Activated B cell treated with CpG ODN at 0.5 μM for 24 hours (primary cell): ENCODE measurements at regions of chr2 and their contacts with region 1.

Region 1: DNA sequence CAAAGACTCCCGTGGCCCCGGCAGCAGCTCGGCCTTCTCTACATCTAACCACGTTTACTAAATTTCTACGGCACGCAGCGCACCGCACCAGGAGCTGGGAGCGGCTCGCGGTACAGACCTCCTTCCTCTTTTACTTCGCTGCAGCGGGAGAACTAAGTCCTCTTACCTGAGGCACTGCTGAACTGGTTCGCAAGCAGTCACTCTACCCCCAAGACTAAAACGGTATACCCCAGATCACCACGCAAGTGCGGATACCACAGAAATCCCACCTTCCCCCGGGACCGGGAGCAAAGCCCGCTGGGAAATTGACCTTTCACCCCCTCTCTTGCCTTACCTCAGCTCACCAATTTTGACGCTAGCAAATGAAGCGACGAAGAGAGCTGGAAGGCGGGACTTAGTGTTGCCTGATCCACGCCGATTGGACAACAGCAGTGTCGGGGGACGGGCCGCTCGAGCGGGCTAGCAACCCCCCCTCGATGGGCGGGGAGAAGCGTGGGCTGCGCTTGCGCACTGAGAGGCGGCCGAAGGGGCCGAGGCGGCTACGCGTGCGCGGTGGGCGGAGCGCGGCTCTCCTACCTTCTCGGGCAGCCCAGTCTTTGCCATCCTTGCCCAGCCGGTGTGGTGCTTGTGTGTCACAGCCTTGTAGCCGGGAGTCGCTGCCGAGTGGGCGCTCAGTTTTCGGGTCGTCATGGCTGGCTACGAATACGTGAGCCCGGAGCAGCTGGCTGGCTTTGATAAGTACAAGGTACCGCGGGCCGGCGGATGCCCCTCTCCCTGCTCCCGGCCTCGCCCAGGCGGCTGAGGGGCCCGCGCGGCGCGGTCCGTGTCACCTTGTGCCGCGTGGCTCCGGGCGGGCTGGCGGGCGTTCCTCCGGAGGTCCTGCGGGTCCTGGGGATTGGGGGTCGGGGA is at the start of gene SELENOI:
- DNase-seq: peak; percentile 99
- ATAC-seq: peak; percentile 96
- H3K4me3 Mint-ChIP-seq: peak within 1 kb of the TSS; percentile 95
- H3K27ac Mint-ChIP-seq: peak within 1 kb of the TSS; percentile 95
- H3K4me1 Mint-ChIP-seq: peaks cover 42% of the 10 kb centered on the region
- H3K27me3 Mint-ChIP-seq: no peaks in the 10 kb centered on the region
- CTCF ChIP-seq: no peak
- total RNA-seq, gene SELENOI: 20.2 and 21.1 TPM in 2 replicates

Region 2: DNA sequence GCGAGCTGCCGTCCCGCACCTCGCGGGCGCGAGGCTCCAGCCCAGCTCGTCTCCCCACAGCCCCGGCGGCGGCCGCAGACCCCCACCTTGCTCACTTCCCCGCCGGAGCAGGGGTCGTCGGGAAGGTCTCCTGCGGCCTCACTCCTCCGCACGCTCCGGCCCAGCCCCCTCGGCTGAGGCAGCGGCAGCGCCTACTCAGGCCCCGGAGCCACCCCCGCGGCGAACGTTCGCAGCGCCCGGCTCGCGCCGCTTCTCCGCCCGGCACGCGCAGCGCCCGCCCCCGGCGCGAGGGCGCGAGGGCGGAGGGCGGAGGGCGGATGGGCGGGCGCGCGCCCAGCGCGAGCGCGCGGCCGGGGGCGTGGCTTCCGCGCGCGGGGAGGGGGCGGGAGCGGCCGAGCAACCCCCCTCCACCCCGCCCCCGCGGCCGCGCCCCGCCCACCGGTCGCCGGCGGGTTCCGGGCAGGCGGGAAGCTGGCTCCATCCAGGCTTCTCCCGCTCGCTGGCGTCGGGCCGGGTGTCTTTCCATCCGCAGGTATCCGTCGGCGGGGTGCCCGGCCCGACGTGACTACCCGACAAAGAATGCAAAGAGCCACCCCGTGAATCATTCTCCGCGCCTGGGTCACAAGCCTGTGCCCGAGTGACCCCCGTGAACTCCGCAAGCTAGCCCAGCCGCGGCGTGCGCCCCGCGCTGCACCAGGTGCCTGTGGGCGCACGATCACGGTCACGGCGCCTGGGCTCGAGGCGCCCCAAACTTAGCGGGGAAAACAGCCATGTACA is 672.3 kb before region 1 on chr2 and contains the start of gene DTNB:
- CTCF ChIA-PET with region 1: no interaction called
- POLR2A ChIA-PET with region 1: no interaction called
- intact Hi-C with region 1: loop called (anchors 10 kb)
- DNase-seq: peak; percentile 83
- ATAC-seq: peak; percentile 79
- H3K4me3 Mint-ChIP-seq: peak within 1 kb of the TSS; percentile 88
- H3K27ac Mint-ChIP-seq: peak within 1 kb of the TSS; percentile 72
- H3K4me1 Mint-ChIP-seq: peaks cover 15% of the 10 kb centered on the region
- H3K27me3 Mint-ChIP-seq: no peaks in the 10 kb centered on the region
- CTCF ChIP-seq: no peak
- total RNA-seq, gene DTNB: 18.3 and 28.9 TPM in 2 replicates

Region 3: DNA sequence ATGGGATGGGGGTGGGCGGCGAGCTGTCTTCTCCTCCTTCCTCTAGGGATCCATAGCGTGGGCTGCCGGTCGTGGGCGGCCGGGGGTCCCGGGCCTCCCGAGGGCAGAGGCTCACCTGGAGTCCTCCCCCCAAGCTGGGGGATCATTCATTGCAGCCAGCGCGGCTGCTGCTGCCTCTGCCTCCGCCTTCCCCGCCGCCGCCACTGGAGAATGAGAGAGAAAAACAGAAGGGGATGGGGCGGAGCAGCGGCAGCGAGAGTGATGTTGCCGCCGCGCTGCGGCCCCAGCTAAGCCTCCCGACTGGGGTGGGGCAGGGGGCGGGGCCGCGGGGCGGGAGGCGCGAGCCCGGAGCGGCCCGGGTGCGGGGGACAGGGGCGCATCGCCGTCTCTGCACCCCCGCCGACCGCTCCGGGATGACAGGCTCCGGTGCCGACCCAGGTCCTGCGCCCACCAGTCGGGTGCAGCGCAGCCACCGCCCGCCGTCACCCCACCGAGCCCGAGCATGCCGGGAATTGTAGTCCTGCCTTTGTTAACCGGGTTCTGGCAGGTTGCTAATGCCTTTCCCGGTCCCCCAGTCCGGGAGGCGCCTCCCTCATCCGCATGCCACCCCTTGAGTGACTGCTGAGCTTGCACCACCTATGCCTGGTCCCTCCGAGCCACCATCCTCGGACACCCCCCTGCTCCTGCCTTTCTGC is 363.4 kb before region 1 on chr2 and contains the start of gene KIF3C:
- CTCF ChIA-PET with region 1: no interaction called
- POLR2A ChIA-PET with region 1: no interaction called
- intact Hi-C with region 1: loop called (anchors 5 kb)
- DNase-seq: peak; percentile 60
- ATAC-seq: peak; percentile 86
- H3K4me3 Mint-ChIP-seq: peak within 1 kb of the TSS; percentile 86
- H3K27ac Mint-ChIP-seq: peak within 1 kb of the TSS; percentile 18
- H3K4me1 Mint-ChIP-seq: no peaks in the 10 kb centered on the region
- H3K27me3 Mint-ChIP-seq: no peaks in the 10 kb centered on the region
- CTCF ChIP-seq: no peak
- total RNA-seq, gene KIF3C: 1.5 and 1.8 TPM in 2 replicates

Region 4: DNA sequence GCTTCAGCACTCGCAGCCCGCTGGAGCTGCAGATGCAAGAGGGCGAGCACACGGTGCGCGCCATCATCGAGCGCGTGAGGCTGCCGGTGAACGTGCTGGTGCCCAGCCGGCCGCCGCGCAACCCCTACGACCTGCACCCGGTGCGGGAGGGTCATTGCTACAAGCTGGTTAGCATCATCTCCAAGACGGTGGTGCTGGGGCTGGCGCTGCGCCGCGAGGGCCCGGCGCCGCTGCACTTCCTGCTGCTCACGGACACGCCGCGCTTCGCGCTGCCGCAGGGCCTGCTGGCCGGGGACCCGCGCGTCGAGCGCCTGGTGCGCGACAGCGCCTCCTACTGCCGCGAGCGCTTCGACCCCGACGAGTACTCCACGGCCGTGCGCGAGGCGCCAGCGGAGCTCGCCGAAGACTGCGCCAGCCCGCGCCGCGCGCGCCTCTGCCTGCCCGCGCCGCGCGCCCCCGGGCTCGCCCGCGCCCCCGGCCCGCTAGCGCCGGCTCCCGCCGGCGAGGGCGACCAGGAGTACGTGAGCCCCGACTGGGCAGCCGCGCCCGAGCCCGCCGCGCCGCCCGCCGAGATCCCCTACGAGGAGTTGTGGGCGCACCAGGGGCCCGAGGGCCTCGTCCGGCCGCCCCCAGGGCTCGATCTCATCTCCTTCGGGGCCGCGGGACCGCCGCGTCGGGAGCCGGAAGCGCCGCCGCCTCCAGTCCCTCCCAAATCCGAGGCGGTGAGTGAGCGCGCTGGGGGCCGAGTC is 161.1 kb before region 1 on chr2:
- CTCF ChIA-PET with region 1: no interaction called
- POLR2A ChIA-PET with region 1: interaction called, 11 read pairs
- intact Hi-C with region 1: no loop called
- DNase-seq: peak; percentile 80
- ATAC-seq: peak; percentile 98
- H3K4me3 Mint-ChIP-seq: peak overlapping the region; percentile 75
- H3K27ac Mint-ChIP-seq: no peak overlapping the region
- H3K4me1 Mint-ChIP-seq: peaks cover 10% of the 10 kb centered on the region
- H3K27me3 Mint-ChIP-seq: peaks cover 13% of the 10 kb centered on the region
- CTCF ChIP-seq: no peak

Region 5: DNA sequence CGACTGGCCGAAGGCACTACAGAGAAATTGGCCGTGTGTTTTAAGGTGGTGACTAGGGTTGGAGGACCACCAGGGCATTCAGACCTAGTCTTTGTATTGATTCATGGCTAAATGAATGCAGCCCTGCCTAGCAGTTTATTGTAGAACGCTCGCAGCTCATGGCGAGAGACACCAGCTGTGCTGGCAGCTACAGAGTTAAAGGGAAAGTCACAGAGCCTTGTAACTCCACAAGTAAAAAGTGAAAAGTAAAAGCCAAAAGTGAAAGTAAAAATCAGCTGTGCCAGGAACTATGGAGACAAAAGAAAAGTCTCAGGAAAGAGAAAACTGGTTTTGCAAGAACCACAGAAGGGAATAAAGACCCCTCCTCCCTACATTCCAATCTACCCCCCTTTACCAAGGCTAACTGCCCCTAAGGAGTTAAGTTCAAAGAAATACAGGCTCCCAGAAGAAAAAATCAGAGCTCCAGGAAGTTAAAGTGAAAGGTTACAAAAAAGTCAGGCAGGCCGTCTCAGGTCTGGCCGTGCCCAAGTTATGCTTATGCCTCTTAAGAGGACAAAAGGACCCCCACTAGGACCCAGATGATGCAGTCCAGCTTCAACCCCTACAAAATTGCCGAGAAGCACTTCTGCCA is 46.2 kb before region 1 on chr2:
- CTCF ChIA-PET with region 1: no interaction called
- POLR2A ChIA-PET with region 1: interaction called, 25 read pairs
- intact Hi-C with region 1: loop called (anchors 1 kb)
- DNase-seq: no peak
- ATAC-seq: peak; percentile 53
- H3K4me3 Mint-ChIP-seq: no peak overlapping the region
- H3K27ac Mint-ChIP-seq: no peak overlapping the region
- H3K4me1 Mint-ChIP-seq: no peaks in the 10 kb centered on the region
- H3K27me3 Mint-ChIP-seq: no peaks in the 10 kb centered on the region
- CTCF ChIP-seq: no peak

Region 6: DNA sequence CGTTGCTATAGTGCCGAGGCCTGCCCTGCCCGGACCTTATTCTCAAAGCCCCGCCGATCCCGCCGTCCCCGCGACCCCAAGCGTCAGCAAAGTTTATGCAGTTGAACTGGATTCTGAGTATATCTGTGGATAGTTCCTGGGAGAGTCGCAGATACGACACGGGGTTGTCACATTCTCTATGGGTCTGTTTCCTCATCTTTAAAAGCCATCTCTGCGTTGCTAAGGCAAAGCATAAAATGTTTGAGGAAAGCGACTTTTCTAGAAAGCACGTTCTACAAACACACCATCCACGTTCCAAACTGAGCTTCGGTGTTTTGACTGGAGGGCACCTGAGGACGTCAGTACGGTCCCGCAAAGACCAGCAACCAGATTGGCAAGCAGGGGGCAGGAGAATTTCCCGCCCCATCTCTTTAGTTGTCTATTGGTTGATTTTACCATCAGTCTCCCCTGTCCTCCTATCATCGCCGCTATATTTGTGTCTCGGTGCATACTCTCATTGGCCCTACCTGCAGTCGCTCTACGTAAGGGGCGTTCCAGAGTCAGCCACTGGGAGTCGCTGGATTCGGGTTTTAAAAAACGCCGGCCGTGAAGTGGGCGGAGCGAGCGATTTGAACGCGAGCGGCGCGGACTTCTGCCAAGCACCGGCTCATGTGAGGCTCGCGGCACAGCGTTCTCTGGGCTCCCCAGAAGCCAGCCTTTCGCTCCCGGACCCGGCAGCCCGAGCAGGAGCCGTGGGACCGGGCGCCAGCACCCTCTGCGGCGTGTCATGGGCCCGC is 439.8 kb after region 1 on chr2 and contains the start of gene CENPA:
- CTCF ChIA-PET with region 1: no interaction called
- POLR2A ChIA-PET with region 1: no interaction called
- intact Hi-C with region 1: loop called (anchors 10 kb)
- DNase-seq: peak; percentile 87
- ATAC-seq: peak; percentile 99
- H3K4me3 Mint-ChIP-seq: peak within 1 kb of the TSS; percentile 84
- H3K27ac Mint-ChIP-seq: peak within 1 kb of the TSS; percentile 65
- H3K4me1 Mint-ChIP-seq: peaks cover 15% of the 10 kb centered on the region
- H3K27me3 Mint-ChIP-seq: peaks cover 3% of the 10 kb centered on the region
- CTCF ChIP-seq: no peak
- total RNA-seq, gene CENPA: 0.42 TPM in 2 replicates

Region 7: GRCh38 chr2:27890146-27890923 is 1544.5 kb after region 1 on chr2 and contains the starts of genes BABAM2 and RBKS:
- CTCF ChIA-PET with region 1: no interaction called
- POLR2A ChIA-PET with region 1: interaction called, 3 read pairs
- intact Hi-C with region 1: loop called (anchors 10 kb)
- DNase-seq: peak; percentile 93
- ATAC-seq: peak; percentile 78
- H3K4me3 Mint-ChIP-seq: peak within 1 kb of the TSS; percentile 99
- H3K27ac Mint-ChIP-seq: peak within 1 kb of the TSS; percentile 99
- H3K4me1 Mint-ChIP-seq: peaks cover 74% of the 10 kb centered on the region
- H3K27me3 Mint-ChIP-seq: peaks cover 2% of the 10 kb centered on the region
- CTCF ChIP-seq: no peak
- total RNA-seq, gene BABAM2: 51.9 and 55.6 TPM in 2 replicates
- total RNA-seq, gene RBKS: 2.5 and 3.1 TPM in 2 replicates